IMR-90 (cell line): ENCODE measurements at regions of chr18 and their contacts with region 1.

Region 1: DNA sequence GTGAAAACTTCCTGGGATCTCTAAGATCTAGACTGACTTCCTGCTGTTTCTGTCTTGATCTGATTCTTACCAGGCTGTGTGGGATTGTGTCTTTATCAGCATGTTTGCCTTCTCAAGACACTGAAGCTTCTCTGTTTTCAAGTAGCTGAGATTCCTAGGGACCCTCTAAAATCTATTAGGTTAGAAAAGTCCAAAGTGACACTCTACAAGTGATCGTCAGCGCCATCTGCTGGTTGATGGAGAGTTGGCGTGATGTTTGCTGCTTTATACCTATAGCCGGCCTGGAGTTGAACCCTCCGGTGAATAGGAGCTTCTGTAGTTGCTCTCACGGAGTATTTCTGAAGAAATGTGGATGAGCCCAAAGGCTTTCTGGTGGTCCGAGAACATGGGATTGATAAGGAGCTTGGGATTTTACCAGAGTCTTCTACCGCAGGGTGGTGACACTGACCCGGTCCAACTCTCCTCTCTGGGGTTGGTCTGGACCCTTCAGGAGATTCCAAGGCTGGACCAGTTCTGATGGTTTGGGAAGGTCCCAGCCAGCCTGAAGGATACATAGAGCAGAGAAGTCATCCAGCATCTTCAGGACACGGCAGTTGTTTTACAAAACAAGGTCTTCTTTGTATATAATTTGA is 96.0 kb upstream of the TTC39C start:
- DNase-seq: peak; percentile 56
- ATAC-seq: peak; percentile 82
- H3K4me3 ChIP-seq: no peak overlapping the region
- H3K27ac ChIP-seq: no peak overlapping the region
- H3K4me1 ChIP-seq: no peaks in the 10 kb centered on the region
- H3K27me3 ChIP-seq: 0 out of 2 replicates have a peak, but pooled peaks cover 2% of the 10 kb centered on the region
- CTCF ChIP-seq: peak; percentile 72
- POLR2A ChIP-seq: no peak
- RAD21 ChIP-seq: peak; percentile 64

Region 2: GRCh38 chr18:23828426-23828825 is 90.1 kb before region 1 on chr18:
- CTCF ChIA-PET with region 1: no interaction called
- POLR2A ChIA-PET with region 1: no interaction called
- dilution Hi-C with region 1: no loop called
- in situ Hi-C with region 1: no loop called
- intact Hi-C with region 1: loop called (anchors 5 kb)
- DNase-seq: peak; percentile 68
- ATAC-seq: no peak
- H3K4me3 ChIP-seq: no peak overlapping the region
- H3K27ac ChIP-seq: no peak overlapping the region
- H3K4me1 ChIP-seq: no peaks in the 10 kb centered on the region
- H3K27me3 ChIP-seq: no peaks in the 10 kb centered on the region
- CTCF ChIP-seq: no peak
- POLR2A ChIP-seq: no peak
- RAD21 ChIP-seq: no peak

Region 3: GRCh38 chr18:24075731-24076130 is 157.2 kb after region 1 on chr18:
- CTCF ChIA-PET with region 1: no interaction called
- POLR2A ChIA-PET with region 1: no interaction called
- dilution Hi-C with region 1: no loop called
- in situ Hi-C with region 1: no loop called
- intact Hi-C with region 1: loop called (anchors 5 kb)
- DNase-seq: no peak
- ATAC-seq: no peak; the same call in 1 of the 2 replicates
- H3K4me3 ChIP-seq: no peak overlapping the region
- H3K27ac ChIP-seq: peak overlapping the region; percentile 56
- H3K4me1 ChIP-seq: peaks cover 4% of the 10 kb centered on the region
- H3K27me3 ChIP-seq: no peaks in the 10 kb centered on the region
- CTCF ChIP-seq: no peak
- POLR2A ChIP-seq: no peak
- RAD21 ChIP-seq: no peak